ENCODE measurements at regions of chr10 and their contacts with region 1.

Region 1: DNA sequence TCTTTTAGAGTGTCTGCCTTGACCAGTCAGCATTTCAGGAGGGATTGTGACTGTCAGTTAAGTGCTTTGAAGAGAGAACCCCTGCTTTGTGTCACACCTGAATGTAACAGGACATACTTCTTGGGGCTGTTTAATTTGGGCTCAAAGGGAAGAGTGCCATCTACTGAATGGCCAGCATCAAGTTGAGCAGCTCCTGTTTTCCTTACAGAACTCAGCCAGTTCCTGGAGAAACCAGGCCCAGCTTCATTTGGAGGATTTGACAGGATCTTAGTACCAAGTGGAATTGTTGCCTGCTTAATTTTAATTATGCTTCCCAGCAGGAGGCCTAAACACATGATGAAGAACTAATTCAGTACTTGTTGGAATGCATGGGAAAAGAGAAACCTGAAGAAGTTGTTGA is 8.3 kb downstream of the ADD3 start:
- DNase-seq: no peak
- ATAC-seq: peak; percentile 50 to 55
- H3K4me3 ChIP-seq: no peak overlapping the region
- H3K27ac ChIP-seq: no peak overlapping the region
- H3K4me1 ChIP-seq: peaks cover 14% of the 10 kb centered on the region
- H3K27me3 ChIP-seq: no peaks in the 10 kb centered on the region

Region 2: GRCh38 chr10:110067960-110068770 is 52.1 kb after region 1 on chr10:
- intact Hi-C with region 1: loop called in 3 of 4 experiments (anchors 5 to 10 kb)
- DNase-seq: peak; percentile 57 to 78 (median 61)
- ATAC-seq: peak; percentile 94 to 98
- H3K4me3 ChIP-seq: no peak overlapping the region
- H3K27ac ChIP-seq: peak overlapping the region; percentile 92
- H3K4me1 ChIP-seq: peaks cover 6% of the 10 kb centered on the region
- H3K27me3 ChIP-seq: no peaks in the 10 kb centered on the region

Measured in right cardiac atrium (tissue), 5 donors.